ENCODE measurements at regions of chrX and their contacts with region 1.

Region 1: GRCh38 chrX:110853610-110854009 is 58.0 kb upstream of the CHRDL1 start:
- DNase-seq: peak in 4 of 10 donors; percentile 4 to 34 (median 18)
- H3K4me3 ChIP-seq: no peak overlapping the region
- H3K27ac ChIP-seq: no peak overlapping the region
- H3K27me3 ChIP-seq: peaks cover 0 to 93% (median 31%) of the 10 kb centered on the region in 45 donors
- CTCF ChIP-seq: peak in 50 of 56 donors; percentile 15 to 59 (median 43)

Region 2: DNA sequence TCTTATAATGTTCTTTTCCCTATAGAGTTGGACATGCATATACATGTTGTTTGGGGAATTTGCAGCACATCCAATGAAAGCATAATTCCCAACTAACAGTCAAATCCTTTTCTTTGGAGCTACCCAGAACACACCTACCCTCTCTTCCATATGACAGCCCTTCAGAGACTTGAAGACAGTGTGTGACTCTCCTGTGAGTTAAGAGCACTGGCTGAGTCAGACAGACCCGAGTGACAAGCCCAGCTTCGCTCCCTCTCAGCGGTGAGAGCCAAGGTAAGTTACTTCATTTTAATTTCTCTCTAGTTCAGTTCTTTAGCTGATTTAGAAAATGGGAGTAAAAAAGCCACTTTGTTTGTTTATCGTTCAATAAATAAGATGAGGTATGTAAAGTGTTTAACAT is 408.6 kb before region 1 on chrX:
- intact Hi-C with region 1: loop called in 1 of 2 experiments (anchors 5 kb)
- DNase-seq: no peak
- H3K4me3 ChIP-seq: no peak overlapping the region
- H3K27ac ChIP-seq: no peak overlapping the region
- H3K27me3 ChIP-seq: peaks cover 0 to 92% (median 53%) of the 10 kb centered on the region in 45 donors
- CTCF ChIP-seq: no peak

Region 3: GRCh38 chrX:110450050-110450449 is 403.6 kb before region 1 on chrX:
- intact Hi-C with region 1: loop called (anchors 2 to 5 kb)
- DNase-seq: peak; percentile 57 to 91 (median 79)
- H3K4me3 ChIP-seq: no peak overlapping the region
- H3K27ac ChIP-seq: no peak overlapping the region
- H3K27me3 ChIP-seq: peaks cover 0 to 90% (median 31%) of the 10 kb centered on the region in 45 donors
- CTCF ChIP-seq: peak; percentile 44 to 91 (median 78)

Region 4: GRCh38 chrX:111098874-111099273 is 245.3 kb after region 1 on chrX:
- intact Hi-C with region 1: loop called (anchors 10 kb)
- DNase-seq: peak in 6 of 10 donors; percentile 32 to 52 (median 43)
- H3K4me3 ChIP-seq: peak overlapping the region in 36 of 59 donors; percentile 6 to 68 (median 28)
- H3K27ac ChIP-seq: peak overlapping the region in 1 of 59 donors; percentile 51
- H3K27me3 ChIP-seq: peaks cover 0 to 87% (median 37%) of the 10 kb centered on the region in 45 donors
- CTCF ChIP-seq: peak; percentile 19 to 74 (median 60)

Region 5: GRCh38 chrX:111244235-111244750 is 390.7 kb after region 1 on chrX:
- intact Hi-C with region 1: loop called in 1 of 2 experiments (anchors 10 kb)
- DNase-seq: no peak
- H3K4me3 ChIP-seq: no peak overlapping the region
- H3K27ac ChIP-seq: no peak overlapping the region
- H3K27me3 ChIP-seq: peaks cover 0 to 80% (median 17%) of the 10 kb centered on the region in 45 donors
- CTCF ChIP-seq: peak in 55 of 56 donors; percentile 19 to 74 (median 54)

Measured in dorsolateral prefrontal cortex (tissue), 120 donors.